Activated CD4-positive, alpha-beta T cell treated with anti-CD3 and anti-CD28 coated beads, Interleukin-2, amount 10 ng/mL, durations not matched to agents 24 days and 14 days (primary cell): ENCODE measurements at regions of chr11 and their contacts with region 1.

Region 1: DNA sequence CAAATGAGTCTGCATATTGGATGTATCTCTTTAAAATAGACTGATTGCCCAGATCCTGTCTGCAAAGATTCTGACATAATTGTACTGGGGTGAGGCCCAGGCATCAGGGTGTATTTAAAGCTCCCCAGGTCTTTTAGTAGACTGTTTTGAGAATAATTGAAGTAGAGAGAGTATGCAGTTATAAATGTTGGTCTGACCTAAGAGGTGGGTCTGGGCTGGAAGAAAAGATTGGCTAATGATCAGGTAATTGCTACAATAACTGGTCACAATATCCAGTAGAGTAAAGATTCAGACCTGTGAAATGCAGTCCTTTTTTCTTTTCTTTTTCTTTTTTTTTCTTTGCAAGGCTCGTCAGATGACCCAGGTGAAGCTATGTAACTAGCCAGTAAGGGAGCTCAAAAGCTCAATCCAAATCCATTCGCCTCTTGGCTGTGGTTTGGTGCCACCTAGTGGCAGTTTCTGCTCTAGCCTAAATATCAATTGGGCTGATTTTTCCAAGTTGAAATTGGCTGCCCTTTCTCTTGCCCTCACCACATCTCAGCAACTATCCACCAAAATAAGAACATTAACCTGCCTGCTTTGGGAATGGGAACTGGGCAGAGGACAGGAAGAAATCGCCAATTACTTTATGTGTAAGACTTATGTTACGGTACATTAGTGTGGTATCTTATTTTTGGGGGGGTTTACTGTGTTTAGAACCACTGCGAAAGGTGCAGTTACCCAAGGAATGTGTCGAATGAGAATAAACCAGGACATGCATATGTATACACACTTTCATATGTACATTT is 45.9 kb downstream of the ZNF143 start:
- DNase-seq: peak; percentile 93
- H3K4me3 Mint-ChIP-seq: no peak overlapping the region
- H3K27ac Mint-ChIP-seq: no peak overlapping the region
- H3K4me1 Mint-ChIP-seq: peaks cover 13% of the 10 kb centered on the region
- H3K27me3 Mint-ChIP-seq: no peaks in the 10 kb centered on the region

Region 2: DNA sequence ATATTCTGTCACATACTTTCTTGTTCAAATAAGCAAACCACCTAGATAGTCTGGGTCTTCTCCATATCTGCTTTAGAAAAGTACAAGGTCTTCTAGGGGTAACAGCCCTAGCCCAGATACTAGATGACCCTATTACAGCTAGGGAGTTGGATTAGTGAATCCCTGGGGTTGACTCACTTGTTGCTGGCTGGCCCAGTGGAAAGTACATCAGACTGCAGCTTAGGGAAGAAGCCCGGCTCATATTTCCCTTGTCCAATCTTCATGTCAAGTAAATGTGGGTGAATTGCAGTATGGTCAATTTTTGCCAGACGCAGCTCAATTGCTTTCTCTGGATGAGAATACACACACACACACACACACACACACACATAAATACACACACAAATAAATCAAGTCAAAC is 336.2 kb before region 1 on chr11:
- intact Hi-C with region 1: loop called (anchors 2 kb)
- DNase-seq: no peak
- H3K4me3 Mint-ChIP-seq: no peak overlapping the region
- H3K27ac Mint-ChIP-seq: no peak overlapping the region
- H3K4me1 Mint-ChIP-seq: peaks cover 18% of the 10 kb centered on the region
- H3K27me3 Mint-ChIP-seq: no peaks in the 10 kb centered on the region

Region 3: DNA sequence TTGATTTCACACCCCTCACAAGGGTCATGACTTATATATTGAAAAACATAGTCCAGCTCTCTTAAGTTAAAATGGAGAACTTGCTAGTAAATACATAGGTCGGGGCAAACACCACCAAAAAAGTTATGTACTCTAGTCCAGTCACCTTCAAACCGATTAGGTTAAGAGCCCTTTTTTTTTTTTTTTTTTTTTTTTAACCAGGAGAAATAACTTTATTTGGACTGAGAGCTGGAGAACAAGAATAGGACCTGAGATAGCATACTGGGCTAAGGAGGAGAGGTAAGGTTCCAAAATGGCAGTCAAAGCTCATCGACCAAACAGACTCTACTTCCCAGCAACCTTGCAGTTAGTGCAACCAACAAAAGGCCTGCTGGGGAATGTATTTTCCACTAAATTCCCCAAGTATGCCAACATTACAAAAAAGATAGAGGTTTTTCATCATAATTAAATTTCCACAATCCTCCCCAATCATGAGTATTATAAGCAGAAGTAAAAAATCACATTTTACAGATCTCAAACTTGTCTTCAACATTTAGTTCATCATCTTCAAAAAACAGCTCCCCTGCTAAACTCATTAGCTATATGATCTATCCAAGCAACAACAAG is 196.1 kb before region 1 on chr11:
- intact Hi-C with region 1: no loop called
- DNase-seq: no peak
- H3K4me3 Mint-ChIP-seq: no peak overlapping the region
- H3K27ac Mint-ChIP-seq: no peak overlapping the region
- H3K4me1 Mint-ChIP-seq: peaks cover 48% of the 10 kb centered on the region
- H3K27me3 Mint-ChIP-seq: no peaks in the 10 kb centered on the region

Region 4: DNA sequence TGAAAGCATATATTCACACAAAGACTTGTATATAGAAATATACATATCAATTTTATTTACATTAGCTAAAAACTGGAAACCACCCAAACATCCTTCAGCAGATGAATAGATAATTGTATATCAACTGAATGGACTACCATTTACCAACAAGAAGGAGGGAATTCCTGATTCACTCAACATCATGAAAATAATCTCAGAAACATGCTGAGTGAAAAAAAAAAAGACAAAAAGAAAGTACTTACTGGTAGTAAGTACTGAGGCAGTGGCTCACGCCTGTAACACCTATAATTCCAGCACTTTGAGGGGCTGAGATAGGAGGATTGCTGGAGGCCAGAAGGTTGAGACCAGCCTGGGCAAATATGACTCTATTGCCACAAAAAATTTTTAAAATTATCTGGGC is 129.6 kb before region 1 on chr11:
- intact Hi-C with region 1: no loop called
- DNase-seq: no peak
- H3K4me3 Mint-ChIP-seq: no peak overlapping the region
- H3K27ac Mint-ChIP-seq: no peak overlapping the region
- H3K4me1 Mint-ChIP-seq: peaks cover 6% of the 10 kb centered on the region
- H3K27me3 Mint-ChIP-seq: peaks cover 12% of the 10 kb centered on the region